Common myeloid progenitor, CD34-positive (primary cell): ENCODE measurements at regions of chr16 and their contacts with region 1.

Region 1: DNA sequence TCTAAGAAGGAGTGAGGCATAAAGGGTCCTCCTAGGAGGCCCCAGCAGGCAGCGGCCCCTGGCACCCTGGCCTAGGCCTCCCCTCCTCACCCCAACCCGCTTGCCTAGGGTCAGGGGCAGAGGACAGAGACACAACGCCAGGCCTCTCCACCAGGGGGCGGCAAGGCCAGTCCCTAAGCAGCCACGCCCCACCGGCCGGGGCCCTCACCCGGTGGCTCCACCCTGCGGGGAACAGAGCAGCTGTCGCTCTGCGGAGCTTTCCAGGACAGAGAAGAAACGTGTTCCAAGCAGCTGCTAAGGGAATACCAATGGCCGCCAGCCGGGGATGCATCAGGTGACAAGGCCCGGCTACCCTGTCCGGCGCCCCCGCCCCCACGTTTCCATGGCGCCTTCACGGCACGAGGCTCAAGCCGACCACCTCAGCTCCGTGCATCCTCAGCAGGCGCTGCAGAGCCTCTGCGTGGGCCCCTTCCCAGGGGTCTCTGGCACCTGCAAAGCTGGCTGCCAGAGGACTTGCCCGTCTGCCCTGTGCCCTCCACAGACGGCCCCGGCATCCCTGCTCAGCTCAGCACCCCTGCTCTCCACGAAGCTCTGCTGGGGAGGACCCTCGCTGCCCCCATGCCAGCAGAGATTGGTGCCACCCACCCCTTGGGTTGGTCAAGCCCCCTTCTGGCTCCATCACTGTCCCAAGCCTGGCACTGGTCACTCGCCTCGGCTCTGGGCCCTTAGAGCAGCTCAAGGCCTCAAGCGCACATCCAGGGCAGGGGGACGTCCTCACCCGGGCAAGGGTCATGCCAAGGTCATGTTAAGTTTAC is 5.6 kb downstream of the ZNF598 start:
- DNase-seq: peak; percentile 87 to 92 (median 88)
- H3K4me3 ChIP-seq: peak overlapping the region in 4 of 7 experiments; percentile 6 to 62 (median 44)
- H3K27ac ChIP-seq: no peak overlapping the region
- H3K4me1 ChIP-seq: peaks cover 0 to 58% (median 52%) of the 10 kb centered on the region in 4 experiments
- H3K27me3 ChIP-seq: no peaks in the 10 kb centered on the region

Region 2: GRCh38 chr16:1772736-1773584 is 231.1 kb before region 1 on chr16 and contains the starts of genes EME2 and MRPS34:
- CTCF ChIA-PET with region 1: no interaction called
- POLR2A ChIA-PET with region 1: no interaction called
- DNase-seq: peak; percentile 82 to 87 (median 85)
- H3K4me3 ChIP-seq: peak within 1 kb of the TSS; percentile 69 to 94 (median 84)
- H3K27ac ChIP-seq: peak within 1 kb of the TSS; percentile 66 to 79
- H3K4me1 ChIP-seq: peaks cover 5 to 34% (median 32%) of the 10 kb centered on the region in 4 experiments
- H3K27me3 ChIP-seq: no peaks in the 10 kb centered on the region

Region 3: GRCh38 chr16:1984347-1985225 is 19.4 kb before region 1 on chr16:
- CTCF ChIA-PET with region 1: interaction called, 10 read pairs
- POLR2A ChIA-PET with region 1: no interaction called
- DNase-seq: no peak
- H3K4me3 ChIP-seq: peak overlapping the region; percentile 63 to 82 (median 73)
- H3K27ac ChIP-seq: peak overlapping the region in 1 of 2 experiments; percentile 54
- H3K4me1 ChIP-seq: peaks cover 0 to 28% (median 22%) of the 10 kb centered on the region in 4 experiments
- H3K27me3 ChIP-seq: peaks cover 0 to 59% (median 37%) of the 10 kb centered on the region in 5 experiments

Region 4: DNA sequence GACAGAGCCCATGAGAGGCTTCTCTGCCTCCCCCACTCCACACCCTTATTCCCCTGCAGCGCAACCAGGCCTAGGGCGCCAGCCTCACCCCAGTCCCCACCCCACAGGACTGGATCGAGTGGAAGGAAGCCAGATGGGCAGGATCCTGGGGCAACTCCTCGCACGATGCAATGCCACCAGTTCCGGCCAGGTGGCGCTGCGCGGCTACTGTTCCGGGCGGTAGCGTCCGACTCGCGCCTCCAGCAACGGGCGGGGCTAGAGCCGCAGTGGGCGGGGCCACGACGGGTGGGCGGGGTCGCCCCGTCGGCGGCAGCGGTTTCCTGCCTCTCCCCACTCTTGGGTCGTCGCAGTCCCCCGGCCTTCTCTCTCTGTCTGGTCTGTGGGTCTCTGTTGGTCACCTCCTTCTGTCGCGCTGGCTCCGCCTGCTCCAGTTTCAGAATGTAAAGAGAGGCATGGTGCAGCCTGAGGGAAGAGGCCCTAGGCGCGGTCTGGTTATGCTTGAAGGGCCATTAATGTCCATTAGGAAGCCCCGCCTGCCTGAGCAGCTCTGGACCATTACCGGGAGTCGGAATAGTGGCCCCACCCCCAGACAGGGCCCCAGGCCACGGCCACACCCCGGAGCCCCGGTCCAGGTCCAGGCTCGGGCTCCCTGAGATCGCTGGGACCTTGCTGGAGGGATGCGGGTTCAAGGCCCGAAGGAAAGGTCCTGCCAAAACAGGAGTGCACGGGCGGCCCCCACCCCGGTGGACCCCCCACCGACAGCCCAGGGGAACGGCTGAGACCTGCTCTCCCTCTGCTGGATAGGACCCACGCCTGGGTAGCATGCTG is 19.3 kb after region 1 on chr16:
- CTCF ChIA-PET with region 1: interaction called, 16 read pairs
- POLR2A ChIA-PET with region 1: no interaction called
- DNase-seq: peak; percentile 86 to 92 (median 91)
- H3K4me3 ChIP-seq: peak overlapping the region; percentile 11 to 74 (median 51)
- H3K27ac ChIP-seq: no peak overlapping the region
- H3K4me1 ChIP-seq: peaks cover 0 to 52% (median 38%) of the 10 kb centered on the region in 4 experiments
- H3K27me3 ChIP-seq: peaks cover 0 to 49% (median 8%) of the 10 kb centered on the region in 5 experiments

Region 5: GRCh38 chr16:2033057-2033908 is 29.2 kb after region 1 on chr16:
- CTCF ChIA-PET with region 1: interaction called, 10 read pairs
- POLR2A ChIA-PET with region 1: no interaction called
- DNase-seq: peak in 2 of 3 donors; percentile 80 to 86
- H3K4me3 ChIP-seq: peak overlapping the region in 4 of 7 experiments; percentile 23 to 71 (median 41)
- H3K27ac ChIP-seq: peak overlapping the region in 1 of 2 experiments; percentile 70
- H3K4me1 ChIP-seq: peaks cover 0 to 30% (median 19%) of the 10 kb centered on the region in 4 experiments
- H3K27me3 ChIP-seq: peaks cover 0 to 4% (median 0%) of the 10 kb centered on the region in 5 experiments

Region 6: GRCh38 chr16:2090777-2091546 is 86.9 kb after region 1 on chr16:
- CTCF ChIA-PET with region 1: no interaction called
- POLR2A ChIA-PET with region 1: no interaction called
- DNase-seq: peak in 1 of 3 donors; percentile 22
- H3K4me3 ChIP-seq: peak overlapping the region in 1 of 7 experiments; percentile 15
- H3K27ac ChIP-seq: no peak overlapping the region
- H3K4me1 ChIP-seq: peaks cover 0 to 8% (median 0%) of the 10 kb centered on the region in 4 experiments
- H3K27me3 ChIP-seq: no peaks in the 10 kb centered on the region

Region 7: GRCh38 chr16:2147981-2148671 is 144.1 kb after region 1 on chr16 and contains the start of gene RAB26:
- CTCF ChIA-PET with region 1: interaction called, 80 read pairs
- POLR2A ChIA-PET with region 1: interaction called, 15 read pairs
- DNase-seq: peak; percentile 30 to 68 (median 62)
- H3K4me3 ChIP-seq: peak within 1 kb of the TSS in 6 of 7 experiments; percentile 42 to 73 (median 54)
- H3K27ac ChIP-seq: no peak within 1 kb of the TSS
- H3K4me1 ChIP-seq: peaks cover 0 to 62% (median 38%) of the 10 kb centered on the region in 4 experiments
- H3K27me3 ChIP-seq: no peaks in the 10 kb centered on the region

Region 8: DNA sequence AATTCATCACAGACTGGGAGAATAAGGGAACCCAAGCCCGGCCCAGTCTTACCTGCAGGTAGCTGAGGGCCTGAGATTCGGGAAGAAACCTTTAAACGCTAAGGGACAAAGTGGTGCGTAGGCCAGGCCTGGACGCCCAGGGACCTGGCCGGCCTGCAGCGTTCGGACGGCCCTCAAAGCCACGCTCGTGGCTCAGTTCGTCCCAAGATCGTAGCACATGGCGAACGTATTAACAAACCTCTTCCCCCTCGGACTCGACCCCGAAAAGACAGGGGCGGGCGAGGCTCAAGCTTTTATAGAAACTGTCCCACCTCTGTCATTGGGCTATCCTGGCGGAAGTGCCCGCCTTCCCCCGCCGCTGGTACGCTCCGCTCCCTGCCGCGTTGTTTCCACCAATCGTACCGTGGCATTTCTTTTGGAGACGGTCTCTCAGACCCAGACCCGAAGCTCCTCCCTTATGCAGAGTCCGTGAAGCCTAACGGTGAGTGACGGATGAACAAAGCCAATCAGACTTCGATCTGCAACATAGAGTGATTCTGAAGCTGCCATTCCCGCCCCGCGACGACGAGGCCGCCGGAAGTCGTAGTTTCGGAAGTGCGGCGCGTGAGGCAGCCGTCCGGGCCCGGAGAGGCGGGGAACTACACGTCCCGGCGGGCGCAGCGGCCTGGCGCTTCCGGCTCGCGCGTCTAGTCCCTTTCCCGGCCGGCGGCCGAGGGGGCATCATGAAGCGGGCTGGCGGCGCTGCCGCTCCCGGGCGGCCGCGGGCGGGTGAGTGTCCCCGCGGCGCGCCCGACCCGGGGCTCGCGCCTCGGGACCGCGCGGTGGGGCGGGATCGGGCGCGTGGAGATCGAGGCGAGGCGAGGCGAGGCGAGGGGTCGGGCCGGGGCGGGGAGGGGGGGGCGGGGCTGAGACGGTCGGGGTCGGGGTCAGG is 151.3 kb after region 1 on chr16 and contains the start of gene TRAF7:
- CTCF ChIA-PET with region 1: interaction called, 80 read pairs
- POLR2A ChIA-PET with region 1: interaction called, 15 read pairs
- DNase-seq: peak; percentile 100
- H3K4me3 ChIP-seq: peak within 1 kb of the TSS; percentile 78 to 98 (median 88)
- H3K27ac ChIP-seq: peak within 1 kb of the TSS; percentile 50 to 83
- H3K4me1 ChIP-seq: peaks cover 6 to 55% (median 47%) of the 10 kb centered on the region in 4 experiments
- H3K27me3 ChIP-seq: no peaks in the 10 kb centered on the region